Breast epithelium (tissue), 4 donors: ENCODE measurements at regions of chr4 and their contacts with region 1.

Region 1: DNA sequence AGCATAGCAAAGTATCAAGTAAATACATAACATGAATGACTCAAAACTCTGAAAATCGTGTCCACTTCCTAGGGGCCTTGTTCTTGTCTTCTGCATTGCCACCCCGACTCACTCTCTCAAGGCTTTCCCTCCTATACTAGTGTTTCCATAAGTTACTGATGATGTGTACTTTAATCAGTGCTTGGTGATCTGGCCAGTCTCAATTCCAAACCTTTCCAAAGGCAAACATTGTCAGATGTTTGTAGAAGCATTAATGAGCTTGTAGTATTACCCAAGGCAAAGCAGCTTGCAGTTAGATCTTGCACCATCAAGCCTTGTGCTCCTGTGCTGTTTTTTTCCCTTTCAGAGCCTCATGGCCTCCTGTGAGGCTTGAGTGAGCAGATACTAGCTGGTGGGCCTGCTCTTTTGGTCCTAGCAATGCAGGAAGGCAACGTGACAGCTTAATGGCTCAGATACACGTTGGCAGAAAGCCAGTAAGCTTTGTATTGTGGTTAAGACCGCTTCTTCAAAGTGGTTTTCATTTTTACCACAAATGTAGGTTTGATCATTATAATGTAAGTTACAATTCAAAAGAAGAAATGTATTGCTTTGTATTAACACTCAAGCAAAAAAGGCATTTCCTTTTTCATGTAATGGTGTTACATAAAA is 51.8 kb downstream of the RBPJ start:
- DNase-seq: no peak
- H3K4me3 ChIP-seq: no peak overlapping the region
- H3K27ac ChIP-seq: no peak overlapping the region
- H3K4me1 ChIP-seq: no peaks in the 10 kb centered on the region
- H3K27me3 ChIP-seq: no peaks in the 10 kb centered on the region
- CTCF ChIP-seq: no peak
- POLR2A ChIP-seq: no peak

Region 2: DNA sequence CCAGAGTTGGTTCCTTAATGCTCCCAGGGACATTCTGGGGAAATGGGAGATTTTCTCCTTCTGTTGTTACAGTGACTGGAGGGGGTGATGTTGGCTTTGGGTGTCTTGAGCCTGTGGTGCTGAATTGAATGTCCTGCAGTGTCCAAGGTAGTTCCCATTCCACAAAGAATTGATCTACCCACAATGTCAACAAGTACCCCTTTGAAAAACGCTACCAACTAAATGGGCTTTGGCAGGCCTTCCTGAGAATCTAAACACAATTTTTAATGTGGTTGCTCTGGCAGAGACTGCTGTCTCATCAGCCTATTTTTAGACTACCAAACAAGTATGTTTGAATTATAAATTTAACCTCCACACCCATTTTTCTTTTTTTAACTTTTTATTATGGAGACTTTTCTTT is 48.3 kb after region 1 on chr4:
- intact Hi-C with region 1: loop called (anchors 2 kb)
- DNase-seq: no peak
- H3K4me3 ChIP-seq: no peak overlapping the region
- H3K27ac ChIP-seq: no peak overlapping the region
- H3K4me1 ChIP-seq: no peaks in the 10 kb centered on the region
- H3K27me3 ChIP-seq: no peaks in the 10 kb centered on the region
- CTCF ChIP-seq: no peak
- POLR2A ChIP-seq: no peak